Heart left ventricle (tissue), 16 donors: ENCODE measurements at regions of chr5 and their contacts with region 1.

Region 1: DNA sequence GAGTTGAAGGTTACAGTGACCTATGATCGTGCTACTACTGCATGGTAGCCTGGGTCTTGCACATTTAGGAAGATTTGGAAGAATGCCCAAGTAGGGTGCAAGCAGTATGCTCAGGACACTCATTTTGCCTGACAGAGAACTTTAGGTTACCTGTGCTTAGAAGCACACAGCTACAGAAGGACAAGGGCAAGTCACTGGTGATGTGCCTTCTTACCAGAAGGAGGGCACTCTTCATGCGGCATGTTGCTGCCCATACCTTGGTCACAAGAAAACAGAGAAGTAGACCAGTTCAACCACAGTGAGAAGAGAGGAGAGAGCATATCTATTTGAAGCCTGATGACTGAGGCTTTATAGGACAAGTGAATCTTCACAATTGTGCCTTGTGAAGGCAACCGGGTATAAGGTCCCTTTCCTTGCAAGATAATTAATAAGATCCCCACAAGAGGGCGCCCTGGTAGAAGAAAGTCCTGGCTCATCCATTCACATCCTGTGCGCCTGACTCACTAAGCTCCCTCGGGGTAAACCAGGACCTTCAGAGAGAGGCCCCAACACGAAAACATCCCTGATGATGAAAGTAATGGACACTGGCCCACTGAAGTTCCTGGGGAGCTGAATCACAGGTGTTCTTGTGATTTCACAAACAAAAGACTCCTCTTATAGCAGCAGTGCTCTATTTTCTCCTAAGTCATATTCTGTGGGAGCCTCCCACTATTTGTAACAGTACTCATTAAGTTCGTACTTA is 38.1 kb upstream of the STARD4 start:
- DNase-seq: peak; percentile 71 to 89 (median 84)
- ATAC-seq: peak; percentile 88 to 94 (median 92)
- H3K4me3 ChIP-seq: peak overlapping the region in 3 of 12 donors; percentile 2 to 15 (median 2)
- H3K27ac ChIP-seq: peak overlapping the region; percentile 14 to 83 (median 74)
- H3K4me1 ChIP-seq: peaks cover 0 to 29% (median 14%) of the 10 kb centered on the region in 12 donors
- H3K27me3 ChIP-seq: no peaks in the 10 kb centered on the region
- CTCF ChIP-seq: peak; percentile 58 to 81 (median 75)
- POLR2A ChIP-seq: no peak

Region 2: DNA sequence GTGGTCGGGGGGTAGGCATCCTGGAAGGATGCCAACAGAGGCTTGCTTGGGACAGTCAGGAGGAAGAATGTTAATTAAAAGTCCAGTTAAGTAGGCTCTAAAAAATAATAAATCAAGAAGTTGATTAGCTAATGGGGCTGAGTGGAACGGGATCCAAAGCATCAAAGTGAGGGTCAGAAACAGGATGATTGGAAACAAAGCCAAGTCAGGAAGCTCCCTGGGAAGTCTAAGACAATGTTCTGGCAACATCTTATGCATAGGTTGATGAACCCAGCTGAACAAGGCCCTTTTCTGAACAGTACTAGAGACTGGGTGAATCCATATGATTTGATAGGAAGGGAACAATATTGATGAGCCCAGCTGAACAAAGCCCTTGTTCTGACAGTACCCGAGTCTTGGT is 12.1 kb after region 1 on chr5:
- intact Hi-C with region 1: loop called in 1 of 10 experiments (anchors 1 kb)
- DNase-seq: no peak
- ATAC-seq: peak in 3 of 4 donors; percentile 39 to 78 (median 42)
- H3K4me3 ChIP-seq: no peak overlapping the region
- H3K27ac ChIP-seq: peak overlapping the region in 2 of 12 donors; percentile 13 to 14
- H3K4me1 ChIP-seq: peaks cover 0 to 19% (median 13%) of the 10 kb centered on the region in 12 donors
- H3K27me3 ChIP-seq: no peaks in the 10 kb centered on the region
- CTCF ChIP-seq: no peak
- POLR2A ChIP-seq: no peak

Region 3: GRCh38 chr5:111680737-111681413 is 130.4 kb after region 1 on chr5:
- intact Hi-C with region 1: loop called in 7 of 10 experiments (anchors 5 to 10 kb)
- DNase-seq: peak in 4 of 5 donors; percentile 64 to 85 (median 73)
- ATAC-seq: peak; percentile 74 to 88 (median 88)
- H3K4me3 ChIP-seq: peak overlapping the region in 6 of 12 donors; percentile 10 to 29 (median 17)
- H3K27ac ChIP-seq: peak overlapping the region; percentile 30 to 72 (median 66)
- H3K4me1 ChIP-seq: peaks cover 0 to 37% (median 22%) of the 10 kb centered on the region in 12 donors
- H3K27me3 ChIP-seq: no peaks in the 10 kb centered on the region
- CTCF ChIP-seq: no peak
- POLR2A ChIP-seq: no peak

Region 4: GRCh38 chr5:111757355-111758283 is 207.2 kb after region 1 on chr5:
- intact Hi-C with region 1: loop called in 9 of 10 experiments (anchors 1 to 5 kb)
- DNase-seq: peak; percentile 97 to 98 (median 97)
- ATAC-seq: peak; percentile 85 to 93 (median 90)
- H3K4me3 ChIP-seq: peak overlapping the region; percentile 48 to 89 (median 70)
- H3K27ac ChIP-seq: peak overlapping the region; percentile 85 to 98 (median 92)
- H3K4me1 ChIP-seq: peaks cover 0 to 42% (median 29%) of the 10 kb centered on the region in 12 donors
- H3K27me3 ChIP-seq: no peaks in the 10 kb centered on the region
- CTCF ChIP-seq: peak in 7 of 12 donors; percentile 30 to 52 (median 45)
- POLR2A ChIP-seq: no peak

Region 5: DNA sequence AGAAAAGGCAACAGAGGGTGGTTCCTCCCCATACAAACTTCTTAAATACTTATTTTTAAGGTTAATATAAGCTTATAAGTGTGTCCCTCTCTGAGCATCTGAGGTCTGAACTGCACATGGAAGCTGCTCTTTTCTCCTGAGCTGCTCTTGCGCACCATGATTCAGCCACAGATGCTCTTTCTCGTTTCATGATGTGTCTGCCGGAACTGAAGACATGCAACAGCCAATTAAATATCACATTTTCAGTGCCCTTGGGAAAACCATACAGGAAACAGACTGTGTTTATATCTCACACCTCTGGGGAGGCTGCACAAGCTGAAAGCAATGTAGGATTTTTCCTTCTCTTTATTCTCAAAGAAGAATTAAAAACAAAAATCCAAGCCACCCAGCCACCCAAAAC is 303.3 kb after region 1 on chr5:
- intact Hi-C with region 1: loop called in 1 of 10 experiments (anchors 10 kb)
- DNase-seq: peak in 3 of 5 donors; percentile 9 to 26 (median 18)
- ATAC-seq: peak in 2 of 4 donors; percentile 51 to 60
- H3K4me3 ChIP-seq: no peak overlapping the region
- H3K27ac ChIP-seq: no peak overlapping the region
- H3K4me1 ChIP-seq: peaks cover 0 to 37% (median 12%) of the 10 kb centered on the region in 12 donors
- H3K27me3 ChIP-seq: no peaks in the 10 kb centered on the region
- CTCF ChIP-seq: no peak
- POLR2A ChIP-seq: no peak

Region 6: GRCh38 chr5:111997711-111998110 is 447.3 kb after region 1 on chr5:
- intact Hi-C with region 1: loop called in 1 of 10 experiments (anchors 10 kb)
- DNase-seq: peak in 2 of 5 donors; percentile 13 to 52
- ATAC-seq: peak; percentile 41 to 96 (median 62)
- H3K4me3 ChIP-seq: no peak overlapping the region
- H3K27ac ChIP-seq: no peak overlapping the region
- H3K4me1 ChIP-seq: no peaks in the 10 kb centered on the region
- H3K27me3 ChIP-seq: no peaks in the 10 kb centered on the region
- CTCF ChIP-seq: no peak
- POLR2A ChIP-seq: no peak